Activated naive CD4-positive, alpha-beta T cell treated with anti-CD3 and anti-CD28 coated beads for 36 hours (primary cell): ENCODE measurements at regions of chr9 and their contacts with region 1.

Region 1: GRCh38 chr9:1009101-1009707 is 32.7 kb downstream of the DMRT3 start:
- DNase-seq: peak; percentile 88
- H3K4me3 Mint-ChIP-seq: no peak overlapping the region
- H3K27ac Mint-ChIP-seq: no peak overlapping the region
- H3K4me1 Mint-ChIP-seq: peaks cover 7% of the 10 kb centered on the region
- H3K27me3 Mint-ChIP-seq: peaks cover 30% of the 10 kb centered on the region

Region 2: GRCh38 chr9:385818-386398 is 623.3 kb before region 1 on chr9:
- CTCF ChIA-PET with region 1: no interaction called
- intact Hi-C with region 1: loop called (anchors 10 kb)
- DNase-seq: peak; percentile 64
- H3K4me3 Mint-ChIP-seq: no peak overlapping the region
- H3K27ac Mint-ChIP-seq: no peak overlapping the region
- H3K4me1 Mint-ChIP-seq: no peaks in the 10 kb centered on the region
- H3K27me3 Mint-ChIP-seq: no peaks in the 10 kb centered on the region

Region 3: GRCh38 chr9:763692-764524 is 245.3 kb before region 1 on chr9:
- CTCF ChIA-PET with region 1: no interaction called
- intact Hi-C with region 1: loop called (anchors 2 kb)
- DNase-seq: peak; percentile 62
- H3K4me3 Mint-ChIP-seq: no peak overlapping the region
- H3K27ac Mint-ChIP-seq: no peak overlapping the region
- H3K4me1 Mint-ChIP-seq: no peaks in the 10 kb centered on the region
- H3K27me3 Mint-ChIP-seq: no peaks in the 10 kb centered on the region

Region 4: DNA sequence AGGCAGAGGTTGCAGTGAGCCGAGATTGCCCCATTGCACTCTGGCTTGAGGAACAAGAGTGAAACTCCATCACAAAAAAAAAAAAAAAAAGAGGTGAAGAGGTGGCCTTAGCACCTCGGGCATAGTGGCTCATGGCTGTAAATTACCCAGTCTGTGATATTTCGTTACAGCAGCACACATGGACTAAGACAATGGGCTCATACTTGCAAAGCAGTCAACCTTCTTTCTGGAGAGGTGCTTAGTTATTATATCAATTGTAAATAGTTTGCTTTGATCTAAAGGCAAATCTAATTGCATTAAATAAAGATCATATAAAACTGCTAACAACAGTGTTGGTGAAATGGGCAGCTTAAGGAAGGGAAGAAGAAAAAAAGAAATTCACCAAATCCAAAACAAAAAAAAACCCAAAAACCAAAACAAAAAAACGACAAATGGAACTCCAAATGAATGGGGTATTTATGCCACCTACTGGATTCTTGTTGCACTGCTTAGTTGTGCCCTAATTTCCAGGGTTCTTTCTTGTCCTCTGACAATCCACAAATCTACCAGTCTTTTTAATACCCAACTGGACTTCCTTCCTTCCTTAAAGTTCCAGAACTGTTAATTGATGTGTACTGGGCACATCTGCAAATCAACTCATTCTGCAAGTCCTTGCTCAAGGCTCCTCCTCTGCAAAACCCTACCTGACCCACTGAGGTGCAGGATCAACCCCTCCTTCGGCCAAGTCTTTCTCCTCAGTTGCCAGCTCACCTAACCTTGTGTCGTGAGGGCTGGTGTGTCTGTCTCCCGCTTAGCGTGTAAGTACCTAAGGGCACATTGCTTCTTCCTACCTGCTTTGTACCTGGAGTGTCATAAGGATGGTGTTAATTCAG is 202.7 kb before region 1 on chr9:
- CTCF ChIA-PET with region 1: interaction called, 6 read pairs
- intact Hi-C with region 1: loop called (anchors 5 kb)
- DNase-seq: no peak
- H3K4me3 Mint-ChIP-seq: no peak overlapping the region
- H3K27ac Mint-ChIP-seq: no peak overlapping the region
- H3K4me1 Mint-ChIP-seq: no peaks in the 10 kb centered on the region
- H3K27me3 Mint-ChIP-seq: no peaks in the 10 kb centered on the region

Region 5: GRCh38 chr9:893843-894420 is 115.3 kb before region 1 on chr9:
- CTCF ChIA-PET with region 1: interaction called, 74 read pairs
- intact Hi-C with region 1: loop called (anchors 1 kb)
- DNase-seq: peak; percentile 84
- H3K4me3 Mint-ChIP-seq: no peak overlapping the region
- H3K27ac Mint-ChIP-seq: no peak overlapping the region
- H3K4me1 Mint-ChIP-seq: peaks cover 11% of the 10 kb centered on the region
- H3K27me3 Mint-ChIP-seq: peaks cover 6% of the 10 kb centered on the region

Region 6: GRCh38 chr9:994005-994404 is 15.2 kb before region 1 on chr9:
- CTCF ChIA-PET with region 1: interaction called, 10 read pairs
- intact Hi-C with region 1: no loop called
- DNase-seq: no peak
- H3K4me3 Mint-ChIP-seq: no peak overlapping the region
- H3K27ac Mint-ChIP-seq: no peak overlapping the region
- H3K4me1 Mint-ChIP-seq: no peaks in the 10 kb centered on the region
- H3K27me3 Mint-ChIP-seq: peaks cover 18% of the 10 kb centered on the region

Region 7: GRCh38 chr9:1083325-1083913 is 74.2 kb after region 1 on chr9:
- CTCF ChIA-PET with region 1: no interaction called
- intact Hi-C with region 1: no loop called
- DNase-seq: no peak
- H3K4me3 Mint-ChIP-seq: no peak overlapping the region
- H3K27ac Mint-ChIP-seq: no peak overlapping the region
- H3K4me1 Mint-ChIP-seq: peaks cover 4% of the 10 kb centered on the region
- H3K27me3 Mint-ChIP-seq: peaks cover 19% of the 10 kb centered on the region